ENCODE measurements at regions of chr3 and their contacts with region 1.

Region 1: GRCh38 chr3:16290007-16290826 is 25.2 kb downstream of the OXNAD1 start:
- DNase-seq: peak in 29 of 35 experiments; percentile 28 to 79 (median 51)
- ATAC-seq: peak in 1 of 4 experiments; percentile 14
- H3K4me3 ChIP-seq: peak overlapping the region; percentile 59 to 85
- H3K4me3 Mint-ChIP-seq: peak overlapping the region; percentile 91 to 98 (median 97)
- H3K27ac ChIP-seq: peak overlapping the region; percentile 81
- H3K27ac Mint-ChIP-seq: peak overlapping the region; percentile 98 to 99
- H3K4me1 ChIP-seq: peaks cover 47% of the 10 kb centered on the region in 2 experiments
- H3K4me1 Mint-ChIP-seq: peaks cover 74 to 82% (median 79%) of the 10 kb centered on the region in 3 donors
- H3K27me3 ChIP-seq: no peaks in the 10 kb centered on the region
- H3K27me3 Mint-ChIP-seq: no peaks in the 10 kb centered on the region

Region 2: GRCh38 chr3:16300881-16301359 is 10.7 kb after region 1 on chr3:
- CTCF ChIA-PET with region 1: interaction called, 4 to 49 read pairs
- POLR2A ChIA-PET with region 1: interaction called, 8 to 21 read pairs
- DNase-seq: peak in 34 of 35 experiments; percentile 37 to 84 (median 59)
- ATAC-seq: peak; percentile 82 to 89 (median 85)
- H3K4me3 ChIP-seq: peak overlapping the region; percentile 35 to 71
- H3K4me3 Mint-ChIP-seq: peak overlapping the region; percentile 85 to 88 (median 88)
- H3K27ac ChIP-seq: peak overlapping the region; percentile 77
- H3K27ac Mint-ChIP-seq: peak overlapping the region; percentile 98 to 99
- H3K4me1 ChIP-seq: peaks cover 70 to 94% of the 10 kb centered on the region in 2 experiments
- H3K4me1 Mint-ChIP-seq: peaks cover 96 to 98% (median 97%) of the 10 kb centered on the region in 3 donors
- H3K27me3 ChIP-seq: no peaks in the 10 kb centered on the region
- H3K27me3 Mint-ChIP-seq: no peaks in the 10 kb centered on the region

Region 3: GRCh38 chr3:16319307-16319706 is 29.1 kb after region 1 on chr3:
- CTCF ChIA-PET with region 1: interaction called, 14 to 75 read pairs
- POLR2A ChIA-PET with region 1: interaction called, 4 to 13 read pairs
- DNase-seq: peak; percentile 58 to 91 (median 76)
- ATAC-seq: peak; percentile 72 to 85 (median 76)
- H3K4me3 ChIP-seq: no peak overlapping the region
- H3K4me3 Mint-ChIP-seq: peak overlapping the region in 2 of 3 donors; percentile 28 to 81
- H3K27ac ChIP-seq: peak overlapping the region; percentile 43
- H3K27ac Mint-ChIP-seq: peak overlapping the region; percentile 91 to 98
- H3K4me1 ChIP-seq: peaks cover 46 to 65% of the 10 kb centered on the region in 2 experiments
- H3K4me1 Mint-ChIP-seq: peaks cover 76 to 84% (median 81%) of the 10 kb centered on the region in 3 donors
- H3K27me3 ChIP-seq: no peaks in the 10 kb centered on the region
- H3K27me3 Mint-ChIP-seq: no peaks in the 10 kb centered on the region

Region 4: GRCh38 chr3:16511681-16512434 is 221.6 kb after region 1 on chr3:
- CTCF ChIA-PET with region 1: interaction called in 1 of 2 experiments, 4 read pairs
- POLR2A ChIA-PET with region 1: interaction called, 6 to 11 read pairs
- DNase-seq: peak; percentile 39 to 93 (median 84)
- ATAC-seq: peak; percentile 68 to 88 (median 70)
- H3K4me3 ChIP-seq: peak overlapping the region; percentile 89 to 91
- H3K4me3 Mint-ChIP-seq: peak overlapping the region; percentile 97 to 98 (median 97)
- H3K27ac ChIP-seq: peak overlapping the region; percentile 88
- H3K27ac Mint-ChIP-seq: peak overlapping the region; percentile 89 to 94
- H3K4me1 ChIP-seq: peaks cover 42 to 75% of the 10 kb centered on the region in 2 experiments
- H3K4me1 Mint-ChIP-seq: peaks cover 76 to 83% (median 83%) of the 10 kb centered on the region in 3 donors
- H3K27me3 ChIP-seq: no peaks in the 10 kb centered on the region
- H3K27me3 Mint-ChIP-seq: no peaks in the 10 kb centered on the region

Region 5: GRCh38 chr3:16550676-16551341 is 260.6 kb after region 1 on chr3:
- CTCF ChIA-PET with region 1: interaction called, 3 to 15 read pairs
- POLR2A ChIA-PET with region 1: interaction called, 3 to 4 read pairs
- DNase-seq: peak; percentile 32 to 90 (median 66)
- ATAC-seq: peak; percentile 93 to 99 (median 98)
- H3K4me3 ChIP-seq: no peak overlapping the region
- H3K4me3 Mint-ChIP-seq: no peak overlapping the region
- H3K27ac ChIP-seq: no peak overlapping the region
- H3K27ac Mint-ChIP-seq: peak overlapping the region; percentile 61 to 66
- H3K4me1 ChIP-seq: peaks cover 2% of the 10 kb centered on the region in 2 experiments
- H3K4me1 Mint-ChIP-seq: peaks cover 6 to 9% (median 6%) of the 10 kb centered on the region in 3 donors
- H3K27me3 ChIP-seq: peaks cover 0 to 4% of the 10 kb centered on the region in 2 experiments
- H3K27me3 Mint-ChIP-seq: peaks cover 3 to 9% of the 10 kb centered on the region in 2 donors